Activated CD4-positive, alpha-beta memory T cell treated with anti-CD3 and anti-CD28 coated beads for 36 hours (primary cell): ENCODE measurements at regions of chr3 and their contacts with region 1.

Region 1: DNA sequence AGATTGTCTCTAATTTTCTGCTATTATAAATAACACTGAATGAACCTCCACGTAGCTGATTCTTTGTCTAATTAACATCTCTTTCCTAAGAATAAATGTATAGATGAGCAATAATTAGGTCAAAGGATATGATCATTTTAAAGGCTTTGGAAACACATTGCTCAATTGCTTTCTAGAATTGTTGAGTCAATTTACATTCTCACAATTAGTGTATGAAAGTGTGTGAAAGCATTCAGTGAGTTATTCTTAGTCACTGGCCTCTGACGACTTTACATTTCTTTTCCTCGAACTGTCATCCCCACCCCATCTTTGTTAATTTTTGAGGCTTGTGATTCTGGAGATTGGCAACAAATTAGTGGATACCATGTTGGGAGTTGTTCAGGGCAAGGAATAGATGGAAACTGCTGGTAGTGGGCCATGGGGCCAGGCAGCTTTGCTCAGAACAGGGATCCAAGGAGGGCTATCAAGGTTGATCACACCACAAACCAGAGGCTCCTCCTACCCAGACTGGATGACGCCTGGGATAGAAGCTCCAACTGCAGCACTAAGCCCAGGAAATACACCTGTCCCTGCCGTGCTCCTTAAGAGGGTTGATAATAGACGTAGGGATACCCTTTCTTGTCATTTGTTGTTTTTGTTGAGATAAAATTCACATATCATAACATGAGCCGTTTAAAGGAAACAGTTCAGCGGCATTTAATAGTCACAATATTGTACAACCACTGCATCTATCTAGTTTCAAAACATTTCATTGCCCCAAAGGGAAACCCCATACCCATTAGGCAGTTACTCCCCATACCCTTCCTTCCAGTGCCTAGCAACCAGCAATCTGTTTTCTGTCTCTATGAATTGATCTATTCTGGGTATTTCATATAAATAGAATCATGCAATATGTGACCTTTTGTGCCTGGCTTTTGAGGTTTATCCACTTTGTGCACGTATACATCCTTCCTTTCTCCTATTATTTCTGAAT is 27.9 kb downstream of the EIF1B start:
- DNase-seq: peak; percentile 40
- H3K4me3 Mint-ChIP-seq: peak overlapping the region; percentile 12
- H3K27ac Mint-ChIP-seq: peak overlapping the region; percentile 68
- H3K4me1 Mint-ChIP-seq: peaks cover 20% of the 10 kb centered on the region
- H3K27me3 Mint-ChIP-seq: peaks cover 5% of the 10 kb centered on the region

Region 2: GRCh38 chr3:40211579-40211978 is 125.8 kb before region 1 on chr3:
- CTCF ChIA-PET with region 1: no interaction called
- POLR2A ChIA-PET with region 1: no interaction called
- intact Hi-C with region 1: no loop called
- DNase-seq: no peak
- H3K4me3 Mint-ChIP-seq: no peak overlapping the region
- H3K27ac Mint-ChIP-seq: no peak overlapping the region
- H3K4me1 Mint-ChIP-seq: no peaks in the 10 kb centered on the region
- H3K27me3 Mint-ChIP-seq: no peaks in the 10 kb centered on the region

Region 3: GRCh38 chr3:40309418-40309924 is 28.0 kb before region 1 on chr3 and contains the start of gene EIF1B:
- CTCF ChIA-PET with region 1: interaction called, 4 read pairs
- POLR2A ChIA-PET with region 1: no interaction called
- intact Hi-C with region 1: loop called (anchors 1 kb)
- DNase-seq: peak; percentile 99
- H3K4me3 Mint-ChIP-seq: peak within 1 kb of the TSS; percentile 96
- H3K27ac Mint-ChIP-seq: peak within 1 kb of the TSS; percentile 97
- H3K4me1 Mint-ChIP-seq: peaks cover 23% of the 10 kb centered on the region
- H3K27me3 Mint-ChIP-seq: no peaks in the 10 kb centered on the region
- total RNA-seq, gene EIF1B: 48.6 to 51.0 TPM

Region 4: DNA sequence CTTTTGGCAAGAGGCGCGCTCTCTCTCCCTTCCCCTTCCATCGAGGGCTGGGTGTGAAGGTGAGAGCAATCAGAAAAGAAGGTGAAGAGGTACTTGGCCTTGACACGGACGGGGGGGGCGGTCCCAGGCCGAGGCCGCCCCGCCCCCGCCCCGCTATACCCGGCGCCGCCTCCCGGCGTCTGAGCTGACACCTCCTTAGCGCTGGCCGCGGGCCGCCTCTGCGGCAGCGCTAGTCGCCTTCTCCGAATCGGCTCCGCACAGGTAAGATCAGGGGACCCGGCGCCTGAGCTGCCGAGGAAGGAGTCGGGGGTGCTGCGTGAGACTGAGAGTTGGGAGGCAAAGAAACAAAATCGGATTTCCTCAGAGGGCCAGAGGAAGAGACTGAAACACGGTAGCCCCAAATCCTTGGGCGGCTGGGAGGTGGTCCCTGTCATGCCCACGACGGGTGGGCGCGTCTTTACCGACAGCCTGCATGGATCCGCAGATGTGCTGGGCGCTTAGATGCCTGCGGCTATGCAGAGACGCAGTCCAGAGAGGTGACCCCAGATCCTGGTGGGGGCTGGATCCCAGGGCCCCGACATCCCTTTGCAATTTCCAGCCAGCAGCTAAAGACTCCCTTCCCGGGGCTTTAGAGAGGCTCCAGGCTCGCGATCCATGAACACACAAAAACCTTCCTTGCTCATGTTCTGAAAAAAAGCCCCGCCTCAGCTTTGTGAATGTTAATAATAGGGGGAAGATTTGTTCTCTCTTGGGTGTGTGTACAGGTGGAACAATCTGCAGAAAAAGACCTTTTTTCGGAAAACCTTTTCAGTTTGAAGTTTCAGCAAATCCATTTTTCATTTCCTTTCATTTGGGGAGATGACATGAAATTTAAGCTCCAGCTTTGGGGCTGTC is 49.8 kb after region 1 on chr3 and contains the start of gene ENTPD3:
- CTCF ChIA-PET with region 1: no interaction called
- POLR2A ChIA-PET with region 1: no interaction called
- intact Hi-C with region 1: loop called (anchors 2 kb)
- DNase-seq: peak; percentile 56
- H3K4me3 Mint-ChIP-seq: peak within 1 kb of the TSS; percentile 60
- H3K27ac Mint-ChIP-seq: no peak within 1 kb of the TSS
- H3K4me1 Mint-ChIP-seq: peaks cover 12% of the 10 kb centered on the region
- H3K27me3 Mint-ChIP-seq: peaks cover 27% of the 10 kb centered on the region
- total RNA-seq, gene ENTPD3: not detected

Region 5: GRCh38 chr3:40505599-40506462 is 168.4 kb after region 1 on chr3 and contains the start of gene ZNF620:
- CTCF ChIA-PET with region 1: no interaction called
- POLR2A ChIA-PET with region 1: no interaction called
- intact Hi-C with region 1: loop called (anchors 1 kb)
- DNase-seq: peak; percentile 59
- H3K4me3 Mint-ChIP-seq: peak within 1 kb of the TSS; percentile 91
- H3K27ac Mint-ChIP-seq: peak within 1 kb of the TSS; percentile 72
- H3K4me1 Mint-ChIP-seq: peaks cover 17% of the 10 kb centered on the region
- H3K27me3 Mint-ChIP-seq: no peaks in the 10 kb centered on the region
- total RNA-seq, gene ZNF620: 2.9 to 3.7 TPM

Region 6: DNA sequence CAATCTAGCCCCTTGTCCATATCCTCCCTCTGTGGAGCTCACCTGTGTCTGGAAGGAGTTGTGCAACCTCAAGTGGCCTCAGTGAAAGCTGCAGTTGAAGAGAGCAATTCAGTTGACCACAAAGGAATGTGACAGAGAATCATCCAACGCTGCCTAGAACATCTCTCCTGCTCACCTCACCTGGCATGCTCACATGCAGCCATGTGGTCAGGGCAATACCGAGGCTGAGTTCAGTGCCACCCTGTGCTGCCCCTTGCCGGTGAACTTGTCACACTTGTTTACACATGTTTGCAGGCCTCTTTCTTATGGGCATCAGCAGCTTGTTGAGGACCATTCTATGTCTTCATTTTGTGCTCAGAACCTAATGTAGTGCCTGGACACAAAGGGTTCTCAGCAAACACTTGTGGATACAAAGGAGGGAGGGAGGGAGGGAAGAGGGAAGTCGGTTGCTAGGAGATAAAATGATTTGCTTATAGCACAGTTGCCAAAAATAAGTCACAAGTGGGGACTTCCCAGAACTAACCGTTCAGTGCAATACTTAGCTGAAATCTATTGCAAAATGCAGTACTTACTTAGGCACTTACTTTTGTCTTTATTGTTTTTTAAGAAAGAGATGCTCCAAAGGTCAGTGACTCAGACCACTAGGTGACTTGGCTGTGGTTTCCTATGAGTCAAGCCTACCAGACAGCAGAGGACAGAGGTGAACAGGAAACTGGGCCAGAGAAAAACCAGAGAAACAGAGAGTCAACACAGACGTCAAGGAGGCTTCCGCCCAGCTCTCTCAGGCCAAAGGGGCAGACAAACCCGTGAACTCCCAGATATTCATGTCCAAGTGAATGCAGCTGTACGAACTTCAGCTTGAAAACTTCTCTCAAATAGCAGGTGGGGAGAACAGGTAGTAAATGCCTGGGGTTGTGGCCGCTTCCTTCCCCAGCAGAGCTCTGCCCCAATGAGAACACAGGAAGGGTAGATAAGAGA is 634.1 kb after region 1 on chr3:
- CTCF ChIA-PET with region 1: no interaction called
- POLR2A ChIA-PET with region 1: no interaction called
- intact Hi-C with region 1: loop called (anchors 2 kb)
- DNase-seq: peak; percentile 64
- H3K4me3 Mint-ChIP-seq: no peak overlapping the region
- H3K27ac Mint-ChIP-seq: peak overlapping the region; percentile 73
- H3K4me1 Mint-ChIP-seq: peaks cover 18% of the 10 kb centered on the region
- H3K27me3 Mint-ChIP-seq: peaks cover 29% of the 10 kb centered on the region

Region 7: GRCh38 chr3:41608347-41608746 is 1270.9 kb after region 1 on chr3:
- CTCF ChIA-PET with region 1: no interaction called
- POLR2A ChIA-PET with region 1: no interaction called
- intact Hi-C with region 1: loop called (anchors 1 kb)
- DNase-seq: no peak
- H3K4me3 Mint-ChIP-seq: no peak overlapping the region
- H3K27ac Mint-ChIP-seq: no peak overlapping the region
- H3K4me1 Mint-ChIP-seq: peaks cover 15% of the 10 kb centered on the region
- H3K27me3 Mint-ChIP-seq: no peaks in the 10 kb centered on the region

Region 8: DNA sequence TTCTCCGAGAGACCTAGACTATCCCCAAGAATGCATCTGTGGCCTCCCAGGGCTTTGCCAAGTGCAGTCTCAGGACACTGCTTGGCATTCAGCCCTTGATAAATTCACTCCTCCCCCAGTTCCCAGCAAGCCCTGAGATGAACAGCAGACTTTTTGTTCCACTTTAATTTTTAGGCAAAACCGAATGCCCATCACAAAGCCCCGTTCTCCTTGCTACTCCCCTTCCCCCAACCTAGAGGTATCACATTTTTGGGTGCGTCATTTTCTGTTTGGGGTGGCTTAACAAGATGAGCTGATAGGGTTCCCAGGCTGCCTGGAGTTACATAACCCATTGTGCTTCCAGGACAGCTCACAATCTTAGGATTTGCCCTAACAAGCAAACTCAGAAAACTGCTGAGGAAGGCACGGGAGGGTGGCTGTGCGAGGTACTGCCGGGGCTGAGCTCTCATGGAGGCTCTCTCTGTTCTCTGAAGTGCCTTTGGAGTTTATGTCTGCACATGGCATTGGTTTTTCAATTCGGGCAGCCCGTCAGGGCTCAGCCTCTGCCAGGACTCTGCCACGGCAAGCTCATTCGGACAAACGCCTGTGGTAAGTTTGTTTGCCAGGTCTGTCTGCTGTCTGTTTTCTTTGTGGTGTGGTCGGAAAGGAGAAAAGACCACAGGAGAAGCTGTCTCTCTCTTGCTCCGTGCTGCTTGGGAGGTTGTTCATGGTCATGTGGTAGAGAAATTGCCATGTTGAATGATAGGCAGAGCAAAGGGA is 1753.7 kb after region 1 on chr3 and contains the start of gene TRAK1:
- CTCF ChIA-PET with region 1: no interaction called
- POLR2A ChIA-PET with region 1: no interaction called
- intact Hi-C with region 1: loop called (anchors 10 kb)
- DNase-seq: no peak
- H3K4me3 Mint-ChIP-seq: no peak within 1 kb of the TSS
- H3K27ac Mint-ChIP-seq: no peak within 1 kb of the TSS
- H3K4me1 Mint-ChIP-seq: peaks cover 51% of the 10 kb centered on the region
- H3K27me3 Mint-ChIP-seq: no peaks in the 10 kb centered on the region
- total RNA-seq, gene TRAK1: 19.0 to 19.3 TPM